ENCODE measurements at regions of chr11 and their contacts with region 1.

Region 1: GRCh38 chr11:83181815-83182214 is 11.7 kb upstream of the ANKRD42 start:
- DNase-seq: no peak
- ATAC-seq: no peak
- H3K4me3 ChIP-seq: no peak overlapping the region
- H3K27ac ChIP-seq: no peak overlapping the region
- H3K4me1 ChIP-seq: no peaks in the 10 kb centered on the region
- H3K27me3 ChIP-seq: no peaks in the 10 kb centered on the region
- CTCF ChIP-seq: no peak
- POLR2A ChIP-seq: no peak
- RAD21 ChIP-seq: no peak

Region 2: DNA sequence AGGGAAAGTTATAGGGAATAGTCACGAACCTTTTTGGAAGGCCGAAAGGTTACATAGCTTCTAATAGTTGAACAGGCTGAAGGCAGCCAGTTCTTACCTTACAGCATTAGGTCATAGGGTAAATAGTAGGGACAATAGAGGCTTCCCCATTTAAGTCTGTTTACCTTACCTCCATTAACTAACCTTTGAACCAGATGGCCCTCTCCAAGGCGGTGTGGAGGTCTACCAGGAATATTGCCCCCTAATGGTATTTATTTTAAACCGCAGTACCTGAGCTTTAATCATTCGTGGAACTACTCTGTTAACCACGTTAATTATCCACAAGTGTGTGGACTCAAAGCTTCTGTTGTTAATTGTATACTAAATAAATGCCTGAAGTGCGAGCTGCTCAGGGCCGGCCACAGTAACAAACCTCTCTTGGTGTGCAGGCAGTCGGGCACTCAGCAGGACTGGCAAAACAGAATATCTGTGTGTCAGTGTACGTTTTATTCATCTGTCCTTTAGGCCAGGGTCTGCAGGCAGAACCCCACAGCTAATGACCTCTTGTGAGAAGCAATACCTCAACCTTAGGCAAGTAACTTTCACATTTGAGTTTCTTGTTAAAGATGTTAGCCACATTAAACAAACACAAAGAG is 363.3 kb before region 1 on chr11:
- CTCF ChIA-PET with region 1: no interaction called
- POLR2A ChIA-PET with region 1: no interaction called
- dilution Hi-C with region 1: no loop called
- in situ Hi-C with region 1: no loop called
- intact Hi-C with region 1: no loop called
- DNase-seq: no peak
- ATAC-seq: no peak
- H3K4me3 ChIP-seq: no peak overlapping the region
- H3K27ac ChIP-seq: no peak overlapping the region
- H3K4me1 ChIP-seq: no peaks in the 10 kb centered on the region
- H3K27me3 ChIP-seq: peaks cover 7% of the 10 kb centered on the region
- CTCF ChIP-seq: no peak
- POLR2A ChIP-seq: no peak
- RAD21 ChIP-seq: no peak

Region 3: GRCh38 chr11:83061883-83062282 is 119.9 kb before region 1 on chr11:
- CTCF ChIA-PET with region 1: no interaction called
- POLR2A ChIA-PET with region 1: no interaction called
- dilution Hi-C with region 1: no loop called
- in situ Hi-C with region 1: no loop called
- intact Hi-C with region 1: no loop called
- DNase-seq: no peak
- ATAC-seq: no peak
- H3K4me3 ChIP-seq: no peak overlapping the region
- H3K27ac ChIP-seq: no peak overlapping the region
- H3K4me1 ChIP-seq: no peaks in the 10 kb centered on the region
- H3K27me3 ChIP-seq: no peaks in the 10 kb centered on the region
- CTCF ChIP-seq: no peak
- POLR2A ChIP-seq: no peak
- RAD21 ChIP-seq: no peak

Region 4: GRCh38 chr11:83168756-83169155 is 13.1 kb before region 1 on chr11:
- CTCF ChIA-PET with region 1: interaction called, 3 read pairs
- POLR2A ChIA-PET with region 1: no interaction called
- dilution Hi-C with region 1: no loop called
- in situ Hi-C with region 1: no loop called
- intact Hi-C with region 1: loop called (anchors 2 kb)
- DNase-seq: no peak
- ATAC-seq: no peak
- H3K4me3 ChIP-seq: no peak overlapping the region
- H3K27ac ChIP-seq: no peak overlapping the region
- H3K4me1 ChIP-seq: peaks cover 2% of the 10 kb centered on the region
- H3K27me3 ChIP-seq: no peaks in the 10 kb centered on the region
- CTCF ChIP-seq: no peak
- POLR2A ChIP-seq: no peak
- RAD21 ChIP-seq: no peak

Measured in IMR-90 (cell line).